Ascending aorta (tissue), 2 donors: ENCODE measurements at regions of chr6 and their contacts with region 1.

Region 1: DNA sequence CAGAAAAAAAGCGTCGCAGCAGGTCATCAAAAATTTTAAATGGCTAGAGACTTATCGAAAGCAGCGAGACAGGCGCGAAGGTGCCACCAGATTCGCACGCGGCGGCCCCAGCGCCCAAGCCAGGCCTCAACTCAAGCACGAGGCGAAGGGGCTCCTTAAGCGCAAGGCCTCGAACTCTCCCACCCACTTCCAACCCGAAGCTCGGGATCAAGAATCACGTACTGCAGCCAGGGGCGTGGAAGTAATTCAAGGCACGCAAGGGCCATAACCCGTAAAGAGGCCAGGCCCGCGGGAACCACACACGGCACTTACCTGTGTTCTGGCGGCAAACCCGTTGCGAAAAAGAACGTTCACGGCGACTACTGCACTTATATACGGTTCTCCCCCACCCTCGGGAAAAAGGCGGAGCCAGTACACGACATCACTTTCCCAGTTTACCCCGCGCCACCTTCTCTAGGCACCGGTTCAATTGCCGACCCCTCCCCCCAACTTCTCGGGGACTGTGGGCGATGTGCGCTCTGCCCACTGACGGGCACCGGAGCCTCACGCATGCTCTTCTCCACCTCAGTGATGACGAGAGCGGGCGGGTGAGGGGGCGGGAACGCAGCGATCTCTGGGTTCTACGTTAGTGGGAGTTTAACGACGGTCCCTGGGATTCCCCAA is at the start of gene EEF1A1:
- DNase-seq: peak; percentile 99 to 100
- H3K4me3 ChIP-seq: peak within 1 kb of the TSS; percentile 70 to 78
- H3K27ac ChIP-seq: peak within 1 kb of the TSS; percentile 100
- H3K4me1 ChIP-seq: peaks cover 13 to 38% of the 10 kb centered on the region in 2 donors
- H3K27me3 ChIP-seq: no peaks in the 10 kb centered on the region
- CTCF ChIP-seq: peak in 1 of 3 experiments; percentile 5
- total RNA-seq, gene EEF1A1: 4,361 TPM

Region 2: GRCh38 chr6:73461537-73462350 is 59.1 kb before region 1 on chr6 and contains the start of gene MTO1:
- intact Hi-C with region 1: loop called (anchors 5 kb)
- DNase-seq: peak; percentile 69 to 95
- H3K4me3 ChIP-seq: peak within 1 kb of the TSS; percentile 82 to 96
- H3K27ac ChIP-seq: peak within 1 kb of the TSS; percentile 90 to 95
- H3K4me1 ChIP-seq: peaks cover 0 to 13% of the 10 kb centered on the region in 2 donors
- H3K27me3 ChIP-seq: no peaks in the 10 kb centered on the region
- CTCF ChIP-seq: no peak
- total RNA-seq, gene MTO1: 12.5 TPM

Region 3: GRCh38 chr6:73580247-73581149 is 59.7 kb after region 1 on chr6:
- intact Hi-C with region 1: loop called (anchors 1 kb)
- DNase-seq: peak; percentile 76 to 95
- H3K4me3 ChIP-seq: peak overlapping the region; percentile 30 to 51
- H3K27ac ChIP-seq: peak overlapping the region; percentile 93 to 96
- H3K4me1 ChIP-seq: peaks cover 6 to 21% of the 10 kb centered on the region in 2 donors
- H3K27me3 ChIP-seq: no peaks in the 10 kb centered on the region
- CTCF ChIP-seq: peak in 2 of 3 experiments; percentile 49 to 50

Region 4: DNA sequence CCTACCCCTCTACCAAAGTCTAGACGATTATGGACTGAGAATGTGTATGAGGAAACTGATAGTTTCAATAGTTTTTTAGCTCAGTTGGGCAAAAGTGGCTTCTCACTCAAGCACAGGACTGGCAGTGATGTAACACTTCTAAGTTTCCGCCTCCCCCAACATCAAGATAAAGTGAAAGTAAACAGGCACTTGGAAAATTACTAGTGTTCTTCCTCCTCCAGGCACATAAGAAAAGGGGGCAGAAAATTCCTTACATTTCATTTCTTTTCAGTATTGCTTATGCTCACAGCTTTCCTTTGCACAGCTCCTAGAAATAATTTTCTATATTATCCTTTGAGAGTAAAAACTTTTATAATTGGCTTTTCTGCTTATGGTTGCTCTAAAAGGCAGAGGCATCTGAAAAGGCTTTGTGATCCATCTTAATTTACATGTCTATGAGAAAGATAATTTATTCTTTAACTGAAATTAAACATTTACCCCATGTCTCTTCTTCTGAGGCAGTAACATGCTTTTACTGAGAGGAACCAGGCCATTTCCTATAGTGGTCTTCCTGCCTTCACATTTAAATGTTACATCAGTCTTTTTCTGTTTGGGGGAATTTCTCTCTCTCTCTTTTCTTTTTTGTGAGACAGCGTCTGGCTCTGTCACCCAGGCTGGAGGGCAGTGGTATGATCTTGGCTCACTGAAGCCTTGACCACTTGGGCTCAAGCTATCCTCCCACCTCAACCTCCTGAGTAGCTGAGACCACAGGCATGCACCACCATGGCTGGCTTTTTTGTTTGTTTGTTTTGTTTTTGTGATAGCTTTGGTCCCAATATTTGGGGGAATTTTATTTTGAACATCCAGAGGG is 65.0 kb after region 1 on chr6:
- intact Hi-C with region 1: loop called (anchors 1 kb)
- DNase-seq: peak in 1 of 2 donors; percentile 75
- H3K4me3 ChIP-seq: peak overlapping the region; percentile 25 to 35
- H3K27ac ChIP-seq: peak overlapping the region; percentile 85 to 87
- H3K4me1 ChIP-seq: peaks cover 0 to 9% of the 10 kb centered on the region in 2 donors
- H3K27me3 ChIP-seq: no peaks in the 10 kb centered on the region
- CTCF ChIP-seq: no peak

Region 5: GRCh38 chr6:73610444-73611275 is 89.8 kb after region 1 on chr6:
- intact Hi-C with region 1: loop called (anchors 1 kb)
- DNase-seq: no peak
- H3K4me3 ChIP-seq: no peak overlapping the region
- H3K27ac ChIP-seq: peak overlapping the region in 1 of 2 donors; percentile 27
- H3K4me1 ChIP-seq: peaks cover 0 to 3% of the 10 kb centered on the region in 2 donors
- H3K27me3 ChIP-seq: no peaks in the 10 kb centered on the region
- CTCF ChIP-seq: peak; percentile 60 to 72 (median 65)

Region 6: DNA sequence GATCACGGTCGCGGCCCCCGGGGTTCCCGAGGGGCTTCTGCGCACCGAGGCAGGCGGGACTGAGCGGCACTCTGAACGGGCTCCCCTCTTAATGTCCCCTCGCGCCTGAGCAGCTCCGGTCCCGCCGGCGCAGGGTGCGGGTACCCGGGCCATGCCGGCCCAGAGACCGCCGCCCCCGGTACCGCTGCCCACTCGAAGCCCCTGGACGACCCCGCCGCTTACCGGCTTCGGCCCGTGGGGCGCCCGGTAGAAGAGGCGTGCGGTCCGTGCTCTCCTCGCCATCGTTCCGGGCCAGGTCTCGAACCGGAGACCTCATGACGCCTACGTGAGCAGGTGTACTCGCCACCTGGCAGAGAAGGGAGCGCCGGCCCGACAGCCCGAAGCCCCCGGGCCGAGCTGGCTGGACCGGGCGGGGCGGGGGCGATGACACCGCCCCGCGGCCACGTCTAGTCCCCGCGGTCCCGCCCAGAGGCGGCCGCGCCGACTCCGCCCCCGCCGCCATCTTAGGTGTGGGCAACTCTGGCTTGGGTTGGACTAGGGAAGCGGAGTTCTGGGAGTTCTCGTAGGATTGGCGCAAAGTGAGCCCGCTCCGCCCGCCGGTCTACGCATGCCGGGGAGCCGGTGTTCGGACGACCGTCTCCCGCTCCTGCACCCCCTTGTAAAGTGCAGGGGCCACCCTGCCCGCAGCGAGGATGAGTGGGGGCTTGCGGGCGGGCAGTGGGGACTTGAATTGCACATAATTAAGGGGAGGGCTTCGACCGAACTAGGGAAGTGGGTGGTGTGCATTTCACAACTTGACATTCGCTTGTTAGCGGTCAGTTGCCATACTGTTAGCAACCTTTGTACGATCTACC is 133.0 kb after region 1 on chr6 and contains the start of gene SLC17A5:
- intact Hi-C with region 1: loop called (anchors 1 kb)
- DNase-seq: peak; percentile 88 to 98
- H3K4me3 ChIP-seq: peak within 1 kb of the TSS; percentile 91 to 100
- H3K27ac ChIP-seq: peak within 1 kb of the TSS; percentile 97 to 98
- H3K4me1 ChIP-seq: peaks cover 0 to 4% of the 10 kb centered on the region in 2 donors
- H3K27me3 ChIP-seq: no peaks in the 10 kb centered on the region
- CTCF ChIP-seq: no peak
- total RNA-seq, gene SLC17A5: 23.2 TPM